B cell (primary cell): ENCODE measurements at regions of chr19 and their contacts with region 1.

Region 1: DNA sequence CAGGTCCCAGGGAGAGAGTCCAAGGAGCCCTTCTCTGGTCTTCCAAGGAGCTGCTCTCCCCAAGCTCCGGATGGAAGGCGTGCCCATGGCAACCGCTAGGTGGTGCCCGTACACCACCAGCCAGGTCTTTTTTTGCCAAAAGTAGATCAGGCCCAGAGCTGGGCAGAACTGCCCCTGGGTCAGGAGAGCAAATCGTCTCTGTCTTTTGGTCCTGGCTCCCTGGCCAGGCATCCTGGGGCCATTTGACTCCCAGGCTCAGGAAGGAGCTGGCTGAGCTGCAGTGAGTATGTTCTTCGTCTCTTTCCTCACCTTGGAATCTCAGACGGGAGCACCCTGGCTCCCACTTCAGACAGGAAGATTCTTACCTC is 24.6 kb upstream of the BCL3 start:
- DNase-seq: peak; percentile 89
- ATAC-seq: peak; percentile 93
- H3K4me3 ChIP-seq: no peak overlapping the region
- H3K4me3 Mint-ChIP-seq: peak overlapping the region; percentile 37
- H3K27ac ChIP-seq: no peak overlapping the region
- H3K27ac Mint-ChIP-seq: peak overlapping the region; percentile 53
- H3K4me1 ChIP-seq: peaks cover 31 to 53% of the 10 kb centered on the region in 2 donors
- H3K4me1 Mint-ChIP-seq: peaks cover 44% of the 10 kb centered on the region
- H3K27me3 ChIP-seq: no peaks in the 10 kb centered on the region
- H3K27me3 Mint-ChIP-seq: no peaks in the 10 kb centered on the region
- CTCF ChIP-seq: peak; percentile 100

Region 2: GRCh38 chr19:44689056-44689895 is 34.7 kb before region 1 on chr19:
- CTCF ChIA-PET with region 1: interaction called, 89 read pairs
- POLR2A ChIA-PET with region 1: interaction called, 8 read pairs
- intact Hi-C with region 1: loop called (anchors 5 kb)
- DNase-seq: peak; percentile 82
- ATAC-seq: peak; percentile 54
- H3K4me3 ChIP-seq: no peak overlapping the region
- H3K4me3 Mint-ChIP-seq: no peak overlapping the region
- H3K27ac ChIP-seq: no peak overlapping the region
- H3K27ac Mint-ChIP-seq: no peak overlapping the region
- H3K4me1 ChIP-seq: peaks cover 23 to 44% of the 10 kb centered on the region in 2 donors
- H3K4me1 Mint-ChIP-seq: peaks cover 33% of the 10 kb centered on the region
- H3K27me3 ChIP-seq: peaks cover 0 to 3% (median 0%) of the 10 kb centered on the region in 4 experiments
- H3K27me3 Mint-ChIP-seq: peaks cover 13% of the 10 kb centered on the region
- CTCF ChIP-seq: peak; percentile 93

Region 3: GRCh38 chr19:44746946-44747738 is 23.2 kb after region 1 on chr19:
- CTCF ChIA-PET with region 1: interaction called, 84 read pairs
- POLR2A ChIA-PET with region 1: interaction called, 18 read pairs
- intact Hi-C with region 1: loop called (anchors 1 kb)
- DNase-seq: peak; percentile 89
- ATAC-seq: peak; percentile 67
- H3K4me3 ChIP-seq: peak overlapping the region; percentile 58 to 95 (median 81)
- H3K4me3 Mint-ChIP-seq: peak overlapping the region; percentile 95
- H3K27ac ChIP-seq: peak overlapping the region; percentile 84 to 89
- H3K27ac Mint-ChIP-seq: peak overlapping the region; percentile 93
- H3K4me1 ChIP-seq: peaks cover 42 to 56% of the 10 kb centered on the region in 2 donors
- H3K4me1 Mint-ChIP-seq: peaks cover 51% of the 10 kb centered on the region
- H3K27me3 ChIP-seq: no peaks in the 10 kb centered on the region
- H3K27me3 Mint-ChIP-seq: no peaks in the 10 kb centered on the region
- CTCF ChIP-seq: no peak

Region 4: GRCh38 chr19:44777715-44778347 is 53.9 kb after region 1 on chr19 and contains the start of gene CBLC:
- CTCF ChIA-PET with region 1: interaction called, 591 read pairs
- POLR2A ChIA-PET with region 1: no interaction called
- intact Hi-C with region 1: no loop called
- DNase-seq: no peak
- ATAC-seq: no peak
- H3K4me3 ChIP-seq: no peak within 1 kb of the TSS
- H3K4me3 Mint-ChIP-seq: no peak within 1 kb of the TSS
- H3K27ac ChIP-seq: no peak within 1 kb of the TSS
- H3K27ac Mint-ChIP-seq: no peak within 1 kb of the TSS
- H3K4me1 ChIP-seq: no peaks in the 10 kb centered on the region
- H3K4me1 Mint-ChIP-seq: no peaks in the 10 kb centered on the region
- H3K27me3 ChIP-seq: peaks cover 0 to 15% (median 1%) of the 10 kb centered on the region in 4 experiments
- H3K27me3 Mint-ChIP-seq: peaks cover 8% of the 10 kb centered on the region
- CTCF ChIP-seq: no peak
- total RNA-seq, gene CBLC: not detected in 2 replicates

Region 5: DNA sequence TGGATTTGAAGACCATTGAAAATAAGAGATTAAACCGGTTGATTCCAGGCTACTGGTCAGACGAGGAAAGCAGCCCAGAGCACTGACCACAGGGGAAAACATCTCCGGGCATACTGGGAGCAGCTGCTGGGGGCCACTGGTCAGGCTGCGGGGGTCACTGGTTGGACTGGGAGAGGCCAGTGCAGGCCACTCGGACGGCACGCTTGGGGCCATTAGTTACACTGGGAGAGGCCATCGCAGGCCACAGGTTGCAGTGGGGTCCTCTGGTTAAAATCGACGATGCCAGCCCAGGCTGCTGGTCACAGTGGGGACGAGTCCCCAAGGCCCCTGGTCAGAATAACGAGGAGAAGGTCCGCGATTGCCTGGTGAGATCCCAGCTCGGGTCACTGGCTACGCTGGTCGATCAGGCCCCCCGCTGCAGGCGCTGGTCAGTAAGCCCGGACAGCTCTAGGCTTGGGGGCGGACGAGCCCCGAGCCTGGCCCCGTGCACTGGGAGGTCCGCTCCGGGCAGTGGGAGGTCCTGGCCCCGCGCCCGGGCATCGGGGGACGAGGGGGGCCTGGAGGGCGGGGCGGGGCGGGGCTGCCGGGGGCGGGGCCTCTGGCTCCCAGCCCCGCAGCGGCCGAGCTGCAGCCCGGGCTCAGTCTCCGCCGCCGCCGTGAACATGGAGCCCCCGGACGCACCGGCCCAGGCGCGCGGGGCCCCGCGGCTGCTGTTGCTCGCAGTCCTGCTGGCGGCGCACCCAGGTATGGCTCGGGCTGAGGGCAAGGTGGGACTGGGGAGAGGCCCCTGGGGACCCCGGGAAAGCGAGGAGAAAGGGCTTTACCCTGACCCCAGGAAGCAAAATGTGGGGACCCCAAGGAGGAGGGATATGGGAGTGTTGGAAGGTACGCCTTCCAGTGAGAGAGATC is 84.8 kb after region 1 on chr19 and contains the start of gene BCAM:
- CTCF ChIA-PET with region 1: interaction called, 18 read pairs
- POLR2A ChIA-PET with region 1: no interaction called
- intact Hi-C with region 1: no loop called
- DNase-seq: no peak
- ATAC-seq: peak; percentile 28
- H3K4me3 ChIP-seq: peak within 1 kb of the TSS in 1 of 5 experiments; percentile 24
- H3K4me3 Mint-ChIP-seq: peak within 1 kb of the TSS; percentile 23
- H3K27ac ChIP-seq: no peak within 1 kb of the TSS
- H3K27ac Mint-ChIP-seq: no peak within 1 kb of the TSS
- H3K4me1 ChIP-seq: peaks cover 10% of the 10 kb centered on the region in 2 donors
- H3K4me1 Mint-ChIP-seq: peaks cover 9% of the 10 kb centered on the region
- H3K27me3 ChIP-seq: peaks cover 0 to 31% (median 7%) of the 10 kb centered on the region in 4 experiments
- H3K27me3 Mint-ChIP-seq: peaks cover 33% of the 10 kb centered on the region
- CTCF ChIP-seq: no peak
- total RNA-seq, gene BCAM: not detected in 2 replicates